Left lung (tissue), 14 donors: ENCODE measurements at regions of chr11 and their contacts with region 1.

Region 1: DNA sequence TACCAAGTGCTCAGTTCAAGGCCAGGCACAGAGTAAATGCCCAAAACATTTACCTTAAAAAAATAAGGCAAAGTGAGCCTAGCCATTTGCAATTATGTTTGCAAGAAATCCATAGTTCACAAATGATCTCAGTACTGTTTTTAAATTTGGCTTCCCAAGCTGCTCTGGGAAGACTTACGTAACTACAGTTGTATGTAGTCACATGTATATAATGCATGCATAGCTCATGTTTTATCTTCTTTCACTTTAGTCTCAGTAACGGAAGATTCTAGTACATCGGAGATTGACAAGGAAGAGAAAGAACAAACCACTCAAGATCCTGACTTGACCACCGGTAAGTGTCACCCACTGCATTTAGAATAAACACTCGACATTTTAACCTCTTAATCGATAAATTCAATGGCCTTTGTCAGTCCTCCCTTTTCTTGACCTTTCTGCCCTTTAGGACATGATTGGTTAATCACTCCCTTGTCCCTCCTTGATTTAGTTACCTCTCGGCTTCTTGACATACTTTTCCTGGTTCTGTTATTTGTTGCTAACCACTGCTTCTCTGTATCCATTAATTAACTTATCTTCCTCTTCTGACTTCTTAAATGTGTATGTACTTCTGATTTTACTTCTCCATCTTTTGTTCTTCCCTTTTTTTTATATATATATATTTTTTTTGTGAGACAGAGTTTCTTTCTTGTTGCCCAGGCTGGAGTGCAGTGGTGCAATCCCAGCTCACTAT is 18.0 kb upstream of the JHY start:
- DNase-seq: no peak
- ATAC-seq: peak; percentile 67
- H3K4me3 ChIP-seq: peak overlapping the region in 1 of 2 donors; percentile 15
- H3K27ac ChIP-seq: peak overlapping the region in 1 of 2 donors; percentile 48
- H3K4me1 ChIP-seq: no peaks in the 10 kb centered on the region
- H3K27me3 ChIP-seq: peaks cover 8 to 29% of the 10 kb centered on the region in 2 donors
- CTCF ChIP-seq: no peak

Region 2: GRCh38 chr11:123020968-123021367 is 156.4 kb after region 1 on chr11:
- intact Hi-C with region 1: loop called in 1 of 2 experiments (anchors 5 kb)
- DNase-seq: peak in 2 of 4 donors; percentile 24 to 41
- ATAC-seq: peak; percentile 90
- H3K4me3 ChIP-seq: no peak overlapping the region
- H3K27ac ChIP-seq: no peak overlapping the region
- H3K4me1 ChIP-seq: peaks cover 4 to 10% of the 10 kb centered on the region in 2 donors
- H3K27me3 ChIP-seq: peaks cover 0 to 18% of the 10 kb centered on the region in 2 donors
- CTCF ChIP-seq: peak; percentile 51 to 61